ENCODE measurements at regions of chrX and their contacts with region 1.

Region 1: DNA sequence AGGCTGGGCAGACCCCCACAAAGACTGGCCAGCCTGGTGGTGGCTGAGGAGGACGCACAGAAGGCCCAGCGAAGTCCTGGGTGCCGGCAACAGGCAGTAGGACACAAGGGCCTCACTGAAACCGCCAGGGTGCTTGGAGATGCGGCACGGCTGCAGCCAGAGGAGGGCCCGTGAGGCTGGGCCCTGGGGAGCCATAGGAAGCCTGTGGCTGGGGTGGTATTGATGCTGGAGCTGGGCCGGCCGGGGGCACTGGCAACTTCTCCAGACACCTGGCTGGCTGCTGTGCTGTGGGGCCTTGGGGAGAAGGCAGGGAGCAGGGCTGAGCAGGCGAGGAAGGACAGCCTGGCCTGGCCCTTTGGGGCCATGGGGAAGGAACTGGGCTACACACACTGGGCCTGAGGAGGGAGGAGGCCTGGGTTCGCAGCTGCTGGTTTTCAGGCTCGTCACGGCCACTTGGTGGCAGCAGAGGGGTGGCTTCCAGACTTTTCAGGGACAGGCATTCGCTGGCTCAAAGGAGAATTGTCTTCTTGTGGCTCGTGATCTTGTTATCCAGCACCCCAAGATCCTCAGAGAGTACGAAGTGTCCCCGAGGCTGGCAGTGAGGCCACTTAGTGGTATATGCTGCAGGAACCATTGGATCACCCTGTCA is 37.2 kb downstream of the ATP2B3 start:
- DNase-seq: peak; percentile 69
- H3K4me3 ChIP-seq: no peak overlapping the region
- H3K27ac ChIP-seq: no peak overlapping the region
- H3K4me1 ChIP-seq: no peaks in the 10 kb centered on the region
- H3K27me3 ChIP-seq: peaks cover 3% of the 10 kb centered on the region
- CTCF ChIP-seq: peak; percentile 52 to 60 (median 53)
- EP300 ChIP-seq: no peak
- POLR2A ChIP-seq: no peak

Region 2: GRCh38 chrX:153651540-153652079 is 97.0 kb after region 1 on chrX:
- in situ Hi-C with region 1: loop called in 2 of 4 experiments (anchors 10 to 25 kb)
- intact Hi-C with region 1: loop called (anchors 10 kb)
- DNase-seq: no peak
- H3K4me3 ChIP-seq: no peak overlapping the region
- H3K27ac ChIP-seq: no peak overlapping the region
- H3K4me1 ChIP-seq: peaks cover 0 to 11% (median 4%) of the 10 kb centered on the region in 4 donors
- H3K27me3 ChIP-seq: peaks cover 28% of the 10 kb centered on the region
- CTCF ChIP-seq: peak in 2 of 5 experiments; percentile 10 to 12
- EP300 ChIP-seq: no peak
- POLR2A ChIP-seq: no peak

Region 3: DNA sequence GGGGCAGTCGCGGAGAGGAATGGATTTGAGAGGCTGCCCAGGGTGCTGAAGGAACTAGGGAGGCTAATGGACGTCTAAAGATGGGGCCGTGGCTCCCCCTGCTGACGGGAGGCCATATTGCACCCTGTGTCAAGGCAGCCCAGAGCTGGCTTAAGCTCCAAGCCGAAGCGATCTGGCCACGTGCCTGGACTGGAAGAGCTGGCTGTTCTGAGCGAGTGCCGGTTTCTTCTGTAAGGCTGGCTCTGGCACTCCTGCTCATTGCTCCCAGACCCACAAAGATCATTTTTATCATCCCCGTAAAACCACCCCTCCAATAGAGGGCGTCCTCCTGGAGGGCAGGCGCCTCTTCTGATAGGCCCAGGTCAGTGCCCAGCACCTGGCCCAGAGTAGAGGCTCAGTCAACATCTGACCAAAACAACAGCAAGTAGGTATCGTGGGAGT is 113.3 kb after region 1 on chrX:
- in situ Hi-C with region 1: loop called in 2 of 4 experiments (anchors 10 to 25 kb)
- intact Hi-C with region 1: no loop called
- DNase-seq: peak; percentile 82
- H3K4me3 ChIP-seq: peak overlapping the region in 1 of 4 donors; percentile 14
- H3K27ac ChIP-seq: peak overlapping the region in 2 of 4 donors; percentile 34 to 51
- H3K4me1 ChIP-seq: peaks cover 0 to 2% (median 0%) of the 10 kb centered on the region in 4 donors
- H3K27me3 ChIP-seq: peaks cover 20% of the 10 kb centered on the region
- CTCF ChIP-seq: peak; percentile 54 to 71 (median 68)
- EP300 ChIP-seq: no peak
- POLR2A ChIP-seq: no peak